Activated T-helper 2 cell treated with anti-CD3 and anti-CD28 coated beads, Interferon-gamma antibody, Interleukin-2, Interleukin-4, amounts not matched to agents 10 μg/mL and 5 μg/mL and 100 μg/mL, durations not matched to agents 14 hours and 24 hours and 36 hours (primary cell): ENCODE measurements at regions of chr18 and their contacts with region 1.

Region 1: GRCh38 chr18:32470713-32471633 is at the start of gene GAREM1:
- DNase-seq: peak; percentile 84
- H3K4me3 Mint-ChIP-seq: peak within 1 kb of the TSS; percentile 77
- H3K27ac Mint-ChIP-seq: no peak within 1 kb of the TSS
- H3K4me1 Mint-ChIP-seq: peaks cover 28% of the 10 kb centered on the region
- H3K27me3 Mint-ChIP-seq: peaks cover 69% of the 10 kb centered on the region
- total RNA-seq, gene GAREM1: not detected in 2 replicates

Region 2: DNA sequence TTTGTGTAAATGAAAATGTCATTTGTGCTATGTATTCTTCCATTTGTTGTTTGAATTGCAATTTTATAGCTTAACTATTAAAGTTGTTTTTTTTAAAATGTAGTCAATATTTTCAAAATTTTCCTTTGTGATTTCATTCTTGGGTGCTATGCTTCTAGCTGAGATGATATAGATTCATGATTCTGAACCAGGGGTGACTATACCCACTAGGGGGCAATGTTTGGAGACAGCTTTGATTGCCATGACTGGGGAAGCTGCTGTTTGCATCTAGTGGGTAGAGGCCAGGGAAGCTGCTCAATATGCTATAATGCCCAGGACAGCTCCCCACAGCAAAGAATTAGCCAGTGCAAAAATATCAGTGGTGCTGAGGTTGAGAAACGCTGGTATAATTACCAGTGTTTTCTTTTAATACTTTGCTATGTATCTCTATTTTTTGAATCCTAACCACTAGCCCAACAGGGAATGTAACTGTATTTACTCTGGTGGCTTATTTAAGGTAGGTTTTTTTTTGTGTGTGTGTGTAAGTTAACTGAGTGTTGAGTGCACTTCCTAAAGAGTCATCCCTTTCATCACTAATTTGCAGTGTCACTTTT is 181.4 kb before region 1 on chr18:
- intact Hi-C with region 1: loop called (anchors 10 kb)
- DNase-seq: peak; percentile 14
- H3K4me3 Mint-ChIP-seq: no peak overlapping the region
- H3K27ac Mint-ChIP-seq: no peak overlapping the region
- H3K4me1 Mint-ChIP-seq: no peaks in the 10 kb centered on the region
- H3K27me3 Mint-ChIP-seq: peaks cover 7% of the 10 kb centered on the region